GM18951 (cell line): ENCODE measurements at regions of chr20 and their contacts with region 1.

Region 1: GRCh38 chr20:36886859-36887751 is 11.2 kb downstream of the TLDC2 start:
- POLR2A ChIP-seq: no peak

Region 2: GRCh38 chr20:36605399-36606157 is 281.5 kb before region 1 on chr20 and contains the start of gene RAB5IF:
- in situ Hi-C with region 1: loop called (anchors 25 kb)
- POLR2A ChIP-seq: peak; percentile 89

Region 3: GRCh38 chr20:36835453-36836198 is 51.5 kb before region 1 on chr20:
- in situ Hi-C with region 1: no loop called
- POLR2A ChIP-seq: peak; percentile 73